Pancreas (tissue), 10 donors: ENCODE measurements at regions of chr16 and their contacts with region 1.

Region 1: DNA sequence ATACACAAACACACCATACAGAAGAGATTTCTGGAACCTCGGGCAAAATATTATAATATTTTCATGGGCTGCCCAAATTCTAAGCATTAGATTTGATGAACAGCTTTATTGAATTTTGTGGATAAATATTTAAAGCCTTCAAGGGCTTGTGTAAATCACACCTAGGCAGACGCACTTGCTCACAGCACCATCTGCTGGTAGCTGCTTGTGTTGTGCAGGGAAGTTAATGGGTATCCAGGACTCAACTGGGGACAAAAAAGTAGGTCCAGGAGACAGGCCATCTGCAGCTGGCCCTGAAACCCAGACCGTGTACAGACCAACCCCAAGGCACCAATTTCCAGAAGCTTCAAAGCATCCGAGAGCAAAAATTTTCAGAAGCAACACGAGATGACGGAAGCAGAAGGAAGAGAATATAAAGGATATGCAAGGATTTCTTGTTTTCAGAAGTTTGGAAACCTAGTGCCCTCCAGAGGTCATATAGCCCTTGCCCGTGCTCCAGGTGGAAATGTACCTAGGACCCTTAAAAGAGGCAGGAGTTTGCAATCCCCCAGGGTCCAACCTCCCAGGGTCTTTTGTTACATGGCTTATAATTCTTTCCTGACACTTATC is 140.0 kb downstream of the CHD9NB start:
- DNase-seq: peak; percentile 42 to 80 (median 68)
- ATAC-seq: peak; percentile 71 to 95 (median 92)
- H3K4me3 ChIP-seq: no peak overlapping the region
- H3K27ac ChIP-seq: no peak overlapping the region
- H3K4me1 ChIP-seq: no peaks in the 10 kb centered on the region
- H3K27me3 ChIP-seq: no peaks in the 10 kb centered on the region
- CTCF ChIP-seq: peak; percentile 50 to 80 (median 70)

Region 2: GRCh38 chr16:52068447-52069074 is 844.1 kb before region 1 on chr16:
- intact Hi-C with region 1: loop called in 2 of 3 experiments (anchors 5 to 10 kb)
- DNase-seq: peak in 3 of 6 donors; percentile 24 to 39 (median 35)
- ATAC-seq: peak; percentile 91 to 96 (median 94)
- H3K4me3 ChIP-seq: no peak overlapping the region
- H3K27ac ChIP-seq: no peak overlapping the region
- H3K4me1 ChIP-seq: no peaks in the 10 kb centered on the region
- H3K27me3 ChIP-seq: peaks cover 0 to 8% (median 0%) of the 10 kb centered on the region in 4 donors
- CTCF ChIP-seq: peak in 2 of 4 donors; percentile 20 to 24

Region 3: DNA sequence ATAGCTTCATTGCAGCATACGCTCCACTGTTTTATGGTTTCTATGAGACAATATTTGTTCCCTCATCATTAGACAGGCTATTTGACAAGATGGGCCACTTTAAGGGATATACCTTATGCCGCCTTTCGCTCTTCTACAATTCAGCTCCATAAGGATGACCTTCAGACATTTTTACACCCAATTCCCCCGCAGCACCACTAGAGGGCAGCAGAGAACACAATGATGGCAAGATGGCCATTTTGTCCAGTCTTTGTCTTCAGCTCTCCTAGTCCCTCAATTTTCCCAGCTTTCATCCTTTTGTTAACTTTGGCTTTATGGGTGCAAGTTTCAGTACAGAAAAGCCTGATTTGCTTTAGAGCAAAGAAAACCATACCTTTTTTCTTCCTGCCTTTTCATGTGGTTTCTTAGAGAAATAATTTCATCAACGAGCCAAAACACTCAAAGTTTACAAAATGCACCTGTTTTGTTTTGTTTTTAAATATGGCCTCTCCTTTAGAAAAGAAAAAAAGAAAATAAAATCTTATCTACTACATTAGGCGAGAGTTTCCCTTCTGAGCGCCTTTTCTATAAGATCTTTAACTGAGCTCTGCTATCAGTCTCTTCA is 721.0 kb before region 1 on chr16:
- intact Hi-C with region 1: loop called in 2 of 3 experiments (anchors 5 to 10 kb)
- DNase-seq: peak; percentile 46 to 83 (median 66)
- ATAC-seq: peak; percentile 58 to 98 (median 90)
- H3K4me3 ChIP-seq: no peak overlapping the region
- H3K27ac ChIP-seq: no peak overlapping the region
- H3K4me1 ChIP-seq: peaks cover 0 to 8% (median 0%) of the 10 kb centered on the region in 3 donors
- H3K27me3 ChIP-seq: no peaks in the 10 kb centered on the region
- CTCF ChIP-seq: peak; percentile 84 to 95 (median 87)